Left cardiac atrium (tissue), 4 donors: ENCODE measurements at regions of chr18 and their contacts with region 1.

Region 1: DNA sequence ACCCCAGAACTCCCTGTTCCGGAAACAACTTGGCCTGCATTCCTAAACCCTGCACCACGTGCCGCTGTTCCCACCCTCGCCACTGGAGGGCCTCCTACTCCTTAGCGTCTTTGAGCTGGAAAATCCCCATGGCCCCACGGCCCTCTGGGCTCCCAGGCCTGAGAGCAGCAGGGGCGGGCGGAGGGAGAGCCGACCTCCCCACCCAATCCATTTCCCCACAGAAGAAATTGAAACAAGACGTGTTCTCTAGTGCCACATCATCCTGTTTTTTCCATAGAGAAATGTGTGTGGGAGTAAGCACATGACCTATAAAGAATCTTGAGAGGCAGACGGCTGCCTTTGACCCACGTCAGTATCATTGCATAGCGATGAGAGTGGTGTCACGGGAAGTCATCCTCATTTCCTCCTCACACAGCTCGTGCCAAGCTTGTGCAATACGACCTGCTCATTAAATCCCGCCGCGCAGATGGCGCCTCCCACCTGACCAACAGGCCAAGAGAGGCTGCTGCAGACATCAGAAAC is 79.2 kb downstream of the LAMA1 start:
- DNase-seq: peak; percentile 89
- ATAC-seq: peak; percentile 90 to 98

Region 2: GRCh38 chr18:7000484-7001096 is 37.8 kb before region 1 on chr18:
- intact Hi-C with region 1: no loop called
- DNase-seq: no peak
- ATAC-seq: no peak

Region 3: DNA sequence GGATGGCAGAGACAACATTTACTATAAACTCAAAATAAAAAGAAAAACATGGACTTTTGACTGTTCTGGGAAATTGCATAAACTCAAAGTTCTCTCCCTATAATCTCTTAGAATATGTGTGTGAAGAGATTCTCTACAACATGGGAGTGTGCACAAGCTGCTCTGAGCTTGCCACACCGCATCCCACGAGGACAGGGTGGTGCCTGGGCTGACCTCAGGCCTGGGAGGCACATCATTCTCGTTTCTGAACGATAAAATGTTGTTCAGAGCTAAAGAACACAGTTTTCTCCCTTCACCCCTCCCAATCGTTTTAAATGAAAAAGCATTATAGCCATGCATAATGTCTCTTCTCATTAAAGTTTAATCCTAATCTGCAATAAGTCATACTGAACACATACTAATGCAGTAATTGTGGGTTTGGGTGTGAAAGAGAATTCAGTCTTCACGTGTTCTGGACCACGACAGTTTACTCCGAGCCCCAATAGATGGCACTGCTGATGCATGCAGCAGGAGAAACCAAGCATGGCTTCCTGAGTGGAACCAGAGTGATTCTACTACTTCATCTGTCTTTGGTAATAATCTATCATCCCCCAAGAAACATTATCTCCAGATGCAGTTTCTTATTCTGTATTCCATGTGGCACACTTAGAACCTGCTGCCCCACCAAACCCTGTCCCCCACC is 126.1 kb after region 1 on chr18:
- intact Hi-C with region 1: loop called in 1 of 2 experiments (anchors 10 kb)
- DNase-seq: no peak
- ATAC-seq: peak; percentile 33 to 47